ENCODE measurements at regions of chr3 and their contacts with region 1.

Region 1: DNA sequence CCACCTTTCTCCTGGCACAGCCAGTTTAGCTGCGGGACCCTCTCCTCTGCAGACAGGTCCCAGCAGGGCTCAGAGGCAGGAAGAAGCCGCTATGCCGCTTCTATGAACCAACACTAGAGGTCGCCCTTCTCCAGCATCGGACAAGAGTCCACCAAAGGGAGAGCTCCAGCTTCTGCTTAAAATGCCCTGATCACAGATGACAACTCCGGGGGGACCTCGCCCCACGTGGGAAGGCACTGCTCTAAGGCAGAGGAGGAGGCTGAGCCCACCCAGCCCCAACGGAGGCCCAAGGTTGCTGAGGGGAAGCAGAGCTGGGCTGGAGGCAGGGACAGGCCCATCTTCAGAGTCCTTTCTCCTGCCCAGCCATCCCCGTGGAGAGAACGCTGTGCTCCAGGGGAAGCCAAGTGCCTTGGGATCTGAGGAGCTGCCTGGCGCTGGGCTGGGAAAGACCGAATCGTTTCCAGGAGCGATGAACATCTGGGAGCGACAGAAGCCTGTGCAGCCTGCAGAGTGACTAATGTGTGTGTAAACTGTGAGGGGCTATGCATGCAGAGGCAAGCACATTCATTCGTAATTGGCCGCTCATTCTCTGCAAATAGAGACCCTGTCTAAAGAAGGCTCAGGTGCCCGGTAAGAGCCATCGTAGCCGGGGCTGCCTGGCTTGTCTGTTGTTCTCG is 43.5 kb upstream of the BDH1 start:
- DNase-seq: peak; percentile 77 to 92 (median 89)
- H3K4me3 ChIP-seq: no peak overlapping the region
- H3K27ac ChIP-seq: no peak overlapping the region
- H3K4me1 ChIP-seq: peaks cover 0 to 5% (median 1%) of the 10 kb centered on the region in 4 experiments
- H3K27me3 ChIP-seq: no peaks in the 10 kb centered on the region

Region 2: DNA sequence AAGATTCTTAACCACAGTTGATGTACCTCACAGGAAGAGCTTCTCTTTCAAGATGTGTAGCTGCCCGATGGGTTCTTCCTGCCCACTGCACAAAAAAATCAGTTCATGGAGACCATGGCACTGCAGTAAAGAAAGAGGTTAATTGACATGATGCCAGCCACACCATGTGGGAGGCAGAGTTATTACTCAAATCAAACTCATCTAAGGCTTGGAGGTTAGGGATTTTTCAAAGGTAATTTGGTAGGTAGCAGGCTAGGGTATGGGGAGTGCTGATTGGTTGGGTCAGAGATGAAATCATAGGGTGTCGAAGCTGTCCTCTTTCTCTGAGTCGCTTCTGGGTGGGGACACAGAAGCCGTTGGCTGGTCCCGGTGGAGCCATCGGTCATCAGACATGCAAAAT is 14.0 kb after region 1 on chr3:
- CTCF ChIA-PET with region 1: interaction called, 43 read pairs
- POLR2A ChIA-PET with region 1: no interaction called
- DNase-seq: no peak
- H3K4me3 ChIP-seq: no peak overlapping the region
- H3K27ac ChIP-seq: no peak overlapping the region
- H3K4me1 ChIP-seq: no peaks in the 10 kb centered on the region
- H3K27me3 ChIP-seq: no peaks in the 10 kb centered on the region

Region 3: DNA sequence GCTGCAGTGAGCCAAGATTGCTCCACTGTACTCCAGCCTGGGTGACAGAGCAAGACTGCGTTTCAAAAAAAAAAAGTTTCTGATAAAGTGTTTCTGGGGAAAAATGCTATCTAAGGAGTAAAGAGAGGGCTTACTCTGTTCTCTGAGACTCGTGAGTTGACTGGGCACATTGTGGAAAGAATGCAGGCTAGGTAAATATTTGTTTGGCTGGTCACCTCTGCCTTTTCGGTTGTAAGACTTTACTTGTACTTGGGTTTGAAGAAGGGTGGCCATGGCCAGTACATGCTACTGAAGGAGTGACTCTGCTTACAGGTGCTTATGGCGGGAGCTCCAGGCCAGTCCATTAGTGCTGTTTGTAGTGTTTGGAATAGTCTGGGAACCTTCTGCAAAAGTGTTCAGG is 68.8 kb after region 1 on chr3:
- CTCF ChIA-PET with region 1: interaction called, 17 read pairs
- POLR2A ChIA-PET with region 1: no interaction called
- DNase-seq: no peak
- H3K4me3 ChIP-seq: no peak overlapping the region
- H3K27ac ChIP-seq: no peak overlapping the region
- H3K4me1 ChIP-seq: peaks cover 0 to 3% (median 1%) of the 10 kb centered on the region in 4 experiments
- H3K27me3 ChIP-seq: no peaks in the 10 kb centered on the region

Region 4: DNA sequence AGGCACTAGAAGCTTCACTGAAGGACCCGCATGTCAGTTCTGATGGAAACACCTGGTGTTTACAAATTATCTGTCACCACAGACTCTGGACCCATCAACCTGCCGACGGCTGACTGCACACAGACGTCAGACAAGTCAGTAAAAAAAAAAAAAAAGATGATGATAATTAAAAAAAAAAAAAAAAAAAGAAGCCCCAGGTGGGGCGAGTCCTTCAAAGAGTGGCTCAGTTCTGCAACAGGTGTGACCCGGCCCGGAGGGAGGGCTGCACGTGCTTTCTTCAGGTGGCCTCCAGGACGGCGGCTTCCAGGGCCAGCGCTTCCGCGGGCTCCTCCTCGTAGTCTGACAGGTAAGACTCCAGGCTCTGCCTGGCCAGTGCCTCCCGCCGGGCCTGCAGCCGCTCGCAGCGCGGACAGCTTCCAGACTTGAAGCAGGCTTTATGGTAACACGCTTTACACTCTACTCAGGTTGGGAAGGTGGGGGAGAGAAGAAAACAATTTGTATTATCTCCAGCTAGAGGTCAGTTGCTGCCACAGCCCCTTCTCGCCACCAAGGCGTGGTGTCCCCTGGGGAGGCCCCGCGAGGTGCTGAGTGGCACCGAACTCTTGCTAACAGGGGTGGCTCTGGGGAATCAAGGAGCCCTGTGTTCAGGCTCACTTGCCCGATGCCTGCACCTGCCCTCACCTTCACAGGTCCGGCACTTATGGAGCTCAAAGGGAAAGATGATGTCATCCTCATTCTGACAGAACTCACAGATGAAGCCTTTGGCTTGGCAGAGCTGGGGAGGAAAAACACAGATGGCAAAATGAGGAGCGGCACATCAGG is 75.7 kb after region 1 on chr3:
- CTCF ChIA-PET with region 1: interaction called, 10 read pairs
- POLR2A ChIA-PET with region 1: no interaction called
- DNase-seq: no peak
- H3K4me3 ChIP-seq: no peak overlapping the region
- H3K27ac ChIP-seq: no peak overlapping the region
- H3K4me1 ChIP-seq: peaks cover 0 to 4% (median 0%) of the 10 kb centered on the region in 4 experiments
- H3K27me3 ChIP-seq: no peaks in the 10 kb centered on the region